OCI-LY7 (cell line): ENCODE measurements at regions of chr2 and their contacts with region 1.

Region 1: GRCh38 chr2:264660-265468 is at the start of gene ACP1:
- DNase-seq: peak; percentile 96
- H3K4me3 ChIP-seq: peak within 1 kb of the TSS; percentile 89
- H3K27ac ChIP-seq: peak within 1 kb of the TSS; percentile 59
- H3K4me1 ChIP-seq: peaks cover 53% of the 10 kb centered on the region
- CTCF ChIP-seq: no peak
- total RNA-seq, gene ACP1: 124 and 126 TPM in 2 replicates

Region 2: DNA sequence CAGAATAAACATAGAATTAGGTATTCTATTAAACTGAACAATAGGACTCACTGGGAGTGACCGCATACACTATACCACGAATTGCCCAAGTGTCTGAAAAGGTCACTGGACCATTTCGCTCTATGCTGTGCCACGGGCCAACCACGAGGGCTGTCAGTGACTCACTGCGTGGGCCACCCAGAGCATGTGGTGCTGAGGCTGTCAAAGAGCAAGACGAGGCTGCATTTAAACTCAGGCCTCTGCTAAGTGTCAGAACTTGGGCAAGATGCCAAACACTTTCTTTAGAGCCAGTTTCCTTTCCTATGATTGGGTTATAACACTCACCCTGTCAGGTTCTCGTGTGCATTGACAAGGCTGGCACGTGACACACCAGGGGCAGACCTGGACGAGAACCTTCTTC is 98.5 kb before region 1 on chr2:
- CTCF ChIA-PET with region 1: no interaction called
- POLR2A ChIA-PET with region 1: no interaction called
- intact Hi-C with region 1: no loop called
- DNase-seq: no peak
- H3K4me3 ChIP-seq: no peak overlapping the region
- H3K27ac ChIP-seq: no peak overlapping the region
- H3K4me1 ChIP-seq: no peaks in the 10 kb centered on the region
- CTCF ChIP-seq: no peak

Region 3: DNA sequence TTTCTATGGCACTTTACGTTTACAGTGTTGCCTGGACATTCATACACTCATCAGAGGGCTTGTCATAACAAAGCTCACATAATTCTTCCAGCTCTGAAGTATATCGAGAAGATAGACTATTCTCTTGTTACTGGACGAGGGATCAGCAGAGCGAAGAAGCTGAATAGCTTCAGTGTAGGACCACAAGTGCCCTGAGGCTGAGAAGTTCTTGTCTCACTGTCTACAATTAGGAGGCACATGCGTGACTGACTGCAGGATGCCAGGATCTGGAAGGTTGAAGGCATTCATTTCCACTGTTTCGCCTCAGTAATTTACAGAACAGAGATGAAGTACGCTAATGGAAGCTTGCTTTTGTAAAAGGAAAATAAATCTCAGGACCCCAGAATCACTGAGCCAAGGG is 10.6 kb before region 1 on chr2:
- CTCF ChIA-PET with region 1: no interaction called
- POLR2A ChIA-PET with region 1: no interaction called
- intact Hi-C with region 1: no loop called
- DNase-seq: no peak
- H3K4me3 ChIP-seq: no peak overlapping the region
- H3K27ac ChIP-seq: no peak overlapping the region
- H3K4me1 ChIP-seq: no peaks in the 10 kb centered on the region
- CTCF ChIP-seq: no peak

Region 4: DNA sequence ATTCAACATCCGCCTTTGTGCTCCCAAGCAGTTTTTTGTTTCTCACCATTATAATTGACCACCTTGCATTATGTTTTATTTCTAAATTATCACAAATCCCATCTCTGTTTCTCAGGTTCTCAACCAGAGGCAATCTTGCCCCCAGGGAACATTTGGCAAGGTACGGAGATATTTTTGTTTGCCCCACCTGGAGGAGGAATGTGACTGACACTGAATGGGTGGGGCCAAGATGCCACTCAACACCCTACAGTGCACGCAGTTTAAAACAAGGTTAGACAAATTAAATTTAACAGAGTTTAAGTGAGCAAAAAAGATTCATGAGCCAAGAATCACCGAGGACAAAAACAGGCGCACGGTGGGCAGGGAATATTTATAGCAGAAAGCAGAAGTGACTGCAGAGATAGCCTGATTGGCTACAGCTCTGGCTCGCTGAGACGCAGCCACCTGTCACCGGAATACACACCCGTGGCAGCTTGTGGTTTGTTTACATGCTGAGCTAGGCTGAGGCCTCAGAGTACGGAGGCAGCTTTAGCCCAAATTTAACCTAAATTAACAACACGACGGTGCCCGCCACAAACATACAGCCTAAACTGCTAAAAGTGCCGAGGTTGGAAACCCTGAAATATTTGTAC is 173.0 kb after region 1 on chr2:
- CTCF ChIA-PET with region 1: no interaction called
- POLR2A ChIA-PET with region 1: no interaction called
- intact Hi-C with region 1: loop called (anchors 10 kb)
- DNase-seq: peak; percentile 41
- H3K4me3 ChIP-seq: no peak overlapping the region
- H3K27ac ChIP-seq: peak overlapping the region; percentile 53
- H3K4me1 ChIP-seq: no peaks in the 10 kb centered on the region
- CTCF ChIP-seq: no peak

Region 5: DNA sequence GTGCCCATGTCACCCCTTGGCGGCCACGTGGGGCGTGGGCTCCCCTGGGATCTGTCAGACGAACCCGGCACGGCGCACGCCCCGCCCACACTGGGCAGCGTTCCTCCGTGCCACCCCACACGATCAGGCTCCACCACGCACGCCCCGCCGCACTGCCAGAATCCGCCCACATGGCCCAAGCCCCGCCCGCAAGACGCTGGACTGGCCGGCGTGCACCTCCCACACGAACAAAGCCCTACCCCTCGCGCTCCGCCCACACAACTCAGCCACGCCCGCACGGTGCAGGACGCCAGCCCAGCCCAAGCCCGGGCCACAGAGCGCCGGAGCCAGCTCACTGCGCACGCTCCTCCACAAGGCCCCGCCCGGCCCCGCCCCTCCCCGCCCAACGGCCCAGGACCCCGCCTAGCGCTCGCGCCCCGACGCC is 411.8 kb after region 1 on chr2:
- CTCF ChIA-PET with region 1: no interaction called
- POLR2A ChIA-PET with region 1: interaction called, 3 read pairs
- intact Hi-C with region 1: loop called (anchors 1 kb)
- DNase-seq: peak; percentile 95
- H3K4me3 ChIP-seq: peak overlapping the region; percentile 94
- H3K27ac ChIP-seq: peak overlapping the region; percentile 94
- H3K4me1 ChIP-seq: peaks cover 37% of the 10 kb centered on the region
- CTCF ChIP-seq: no peak